ENCODE measurements at regions of chr10 and their contacts with region 1.

Region 1: DNA sequence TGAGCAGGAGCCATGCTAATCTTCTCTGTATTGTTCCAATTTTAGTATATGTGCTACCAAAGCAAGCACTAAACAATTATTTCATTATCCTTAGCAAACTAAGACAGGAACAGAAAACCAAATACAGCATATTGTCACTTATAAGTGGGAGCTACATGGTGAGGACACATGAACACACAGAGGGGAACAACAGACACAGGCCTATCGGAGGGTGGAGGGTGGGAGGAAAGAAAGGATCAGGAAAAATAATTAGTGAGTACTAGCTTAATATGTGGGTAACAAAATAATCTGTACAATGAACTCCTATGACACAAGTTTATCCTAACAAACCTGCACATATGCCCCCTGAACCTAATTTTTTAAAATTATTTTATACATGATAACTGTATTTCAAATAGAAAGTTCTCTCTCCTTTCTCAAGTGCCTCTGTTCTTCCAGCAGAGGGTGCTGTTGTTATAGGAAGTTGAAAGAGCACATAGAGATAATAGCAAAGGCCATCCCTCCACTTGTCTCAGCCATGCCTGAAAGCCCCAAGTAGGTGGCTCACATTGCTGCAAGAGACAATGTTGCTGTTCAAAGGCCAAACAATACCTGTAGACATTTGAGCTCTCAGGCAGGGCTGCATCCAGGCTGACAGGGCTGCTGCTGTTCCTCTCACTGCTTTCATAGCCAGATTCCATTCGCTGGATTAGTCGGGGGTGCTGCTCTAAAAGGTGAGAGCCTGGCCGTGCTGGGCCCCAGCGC is 33.4 kb upstream of the PPP3CB start:
- DNase-seq: peak; percentile 60
- H3K4me3 Mint-ChIP-seq: no peak overlapping the region
- H3K27ac Mint-ChIP-seq: no peak overlapping the region
- H3K4me1 Mint-ChIP-seq: no peaks in the 10 kb centered on the region
- H3K27me3 Mint-ChIP-seq: no peaks in the 10 kb centered on the region
- CTCF ChIP-seq: peak; percentile 86

Region 2: GRCh38 chr10:73495884-73496674 is 33.2 kb before region 1 on chr10 and contains the start of gene PPP3CB:
- CTCF ChIA-PET with region 1: no interaction called
- intact Hi-C with region 1: no loop called
- DNase-seq: peak; percentile 87
- H3K4me3 Mint-ChIP-seq: peak within 1 kb of the TSS; percentile 86
- H3K27ac Mint-ChIP-seq: peak within 1 kb of the TSS; percentile 78
- H3K4me1 Mint-ChIP-seq: peaks cover 29% of the 10 kb centered on the region
- H3K27me3 Mint-ChIP-seq: no peaks in the 10 kb centered on the region
- CTCF ChIP-seq: no peak
- total RNA-seq, gene PPP3CB: 26.4 and 27.5 TPM in 2 replicates

Region 3: GRCh38 chr10:73586583-73586984 is 57.3 kb after region 1 on chr10:
- CTCF ChIA-PET with region 1: no interaction called
- intact Hi-C with region 1: loop called (anchors 5 kb)
- DNase-seq: peak; percentile 28
- H3K4me3 Mint-ChIP-seq: peak overlapping the region; percentile 11
- H3K27ac Mint-ChIP-seq: peak overlapping the region; percentile 67
- H3K4me1 Mint-ChIP-seq: peaks cover 43% of the 10 kb centered on the region
- H3K27me3 Mint-ChIP-seq: no peaks in the 10 kb centered on the region
- CTCF ChIP-seq: no peak